ENCODE measurements at regions of chr20 and their contacts with region 1.

Region 1: GRCh38 chr20:41509316-41510200 is 108.6 kb downstream of the CHD6 start:
- DNase-seq: peak in 4 of 5 donors; percentile 38 to 59 (median 50)
- ATAC-seq: peak; percentile 78 to 88 (median 81)
- H3K4me3 ChIP-seq: no peak overlapping the region
- H3K27ac ChIP-seq: peak overlapping the region in 11 of 12 donors; percentile 5 to 75 (median 38)
- H3K4me1 ChIP-seq: peaks cover 0 to 60% (median 39%) of the 10 kb centered on the region in 12 donors
- H3K27me3 ChIP-seq: no peaks in the 10 kb centered on the region
- CTCF ChIP-seq: no peak
- POLR2A ChIP-seq: no peak

Region 2: GRCh38 chr20:41387444-41387851 is 122.1 kb before region 1 on chr20:
- intact Hi-C with region 1: no loop called
- DNase-seq: peak in 1 of 5 donors; percentile 40
- ATAC-seq: peak; percentile 21 to 48 (median 30)
- H3K4me3 ChIP-seq: no peak overlapping the region
- H3K27ac ChIP-seq: peak overlapping the region in 8 of 12 donors; percentile 27 to 80 (median 62)
- H3K4me1 ChIP-seq: peaks cover 0 to 29% (median 15%) of the 10 kb centered on the region in 12 donors
- H3K27me3 ChIP-seq: no peaks in the 10 kb centered on the region
- CTCF ChIP-seq: peak in 2 of 12 donors; percentile 9 to 30
- POLR2A ChIP-seq: no peak

Region 3: GRCh38 chr20:41609474-41609873 is 99.9 kb after region 1 on chr20:
- intact Hi-C with region 1: loop called in 3 of 10 experiments (anchors 2 to 10 kb)
- DNase-seq: no peak
- ATAC-seq: no peak
- H3K4me3 ChIP-seq: no peak overlapping the region
- H3K27ac ChIP-seq: no peak overlapping the region
- H3K4me1 ChIP-seq: peaks cover 0 to 64% (median 26%) of the 10 kb centered on the region in 12 donors
- H3K27me3 ChIP-seq: no peaks in the 10 kb centered on the region
- CTCF ChIP-seq: no peak
- POLR2A ChIP-seq: no peak

Region 4: DNA sequence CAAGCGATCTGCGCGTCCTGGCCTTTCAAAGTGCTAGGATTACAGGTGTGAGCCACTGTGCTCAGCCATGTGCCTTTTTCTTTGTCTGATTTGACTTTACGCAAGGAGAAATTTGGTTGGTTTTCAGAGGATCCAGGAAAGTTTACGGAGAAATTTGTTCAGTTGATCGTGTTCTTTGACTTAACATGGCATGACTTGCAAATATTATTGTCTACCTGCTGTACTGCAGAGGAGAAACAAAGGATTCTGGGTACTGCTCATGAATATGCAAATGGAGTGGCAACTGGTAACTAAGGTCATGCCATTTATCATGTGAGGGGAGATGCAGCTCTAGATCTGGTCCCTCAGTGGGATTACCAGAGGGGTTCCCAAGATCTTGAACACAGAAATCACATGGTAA is 177.4 kb after region 1 on chr20:
- intact Hi-C with region 1: loop called in 4 of 10 experiments (anchors 5 to 10 kb)
- DNase-seq: no peak
- ATAC-seq: no peak
- H3K4me3 ChIP-seq: no peak overlapping the region
- H3K27ac ChIP-seq: no peak overlapping the region
- H3K4me1 ChIP-seq: no peaks in the 10 kb centered on the region
- H3K27me3 ChIP-seq: peaks cover 0 to 3% (median 0%) of the 10 kb centered on the region in 9 donors
- CTCF ChIP-seq: no peak
- POLR2A ChIP-seq: no peak